ENCODE measurements at regions of chr21 and their contacts with region 1.

Region 1: GRCh38 chr21:21547368-21547953 is 549.3 kb downstream of the NCAM2 start:
- DNase-seq: no peak
- H3K4me3 ChIP-seq: no peak overlapping the region
- H3K27ac ChIP-seq: no peak overlapping the region
- H3K4me1 ChIP-seq: no peaks in the 10 kb centered on the region
- H3K27me3 ChIP-seq: no peaks in the 10 kb centered on the region
- CTCF ChIP-seq: no peak
- EP300 ChIP-seq: no peak
- POLR2A ChIP-seq: no peak

Region 2: GRCh38 chr21:21631961-21632360 is 84.5 kb after region 1 on chr21:
- in situ Hi-C with region 1: loop called in 1 of 4 experiments (anchors 25 kb)
- intact Hi-C with region 1: no loop called
- DNase-seq: no peak
- H3K4me3 ChIP-seq: no peak overlapping the region
- H3K27ac ChIP-seq: no peak overlapping the region
- H3K4me1 ChIP-seq: no peaks in the 10 kb centered on the region
- H3K27me3 ChIP-seq: no peaks in the 10 kb centered on the region
- CTCF ChIP-seq: no peak
- EP300 ChIP-seq: no peak
- POLR2A ChIP-seq: no peak